A673 (cell line): ENCODE measurements at regions of chr12 and their contacts with region 1.

Region 1: GRCh38 chr12:65306366-65307168 is 28.1 kb downstream of the MSRB3 start:
- DNase-seq: peak; percentile 88
- H3K4me3 ChIP-seq: no peak overlapping the region
- H3K27ac ChIP-seq: peak overlapping the region; percentile 80
- H3K4me1 ChIP-seq: peaks cover 53% of the 10 kb centered on the region
- H3K27me3 ChIP-seq: no peaks in the 10 kb centered on the region
- CTCF ChIP-seq: peak; percentile 82

Region 2: DNA sequence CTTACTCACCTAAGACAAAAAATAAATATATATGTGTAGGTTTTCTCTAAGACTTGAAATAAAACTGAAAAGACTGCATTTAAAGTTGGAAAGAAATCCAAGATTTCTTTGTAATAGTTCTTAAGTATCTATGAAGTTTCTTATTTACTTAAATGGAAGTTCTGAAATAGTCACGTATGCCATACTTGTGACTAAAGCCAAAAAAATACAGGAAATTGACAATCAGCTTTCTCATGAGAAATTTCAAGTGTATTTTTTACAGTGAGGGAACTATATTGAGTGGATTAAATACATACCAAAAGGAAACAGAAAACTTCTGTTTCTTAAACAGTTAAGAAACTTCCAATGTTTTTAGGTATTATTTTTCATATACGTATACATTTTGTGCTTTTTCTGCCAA is 1826.4 kb before region 1 on chr12:
- CTCF ChIA-PET with region 1: no interaction called
- POLR2A ChIA-PET with region 1: no interaction called
- intact Hi-C with region 1: no loop called
- DNase-seq: no peak
- H3K4me3 ChIP-seq: no peak overlapping the region
- H3K27ac ChIP-seq: no peak overlapping the region
- H3K4me1 ChIP-seq: no peaks in the 10 kb centered on the region
- H3K27me3 ChIP-seq: no peaks in the 10 kb centered on the region
- CTCF ChIP-seq: no peak

Region 3: GRCh38 chr12:65529771-65530435 is 223.3 kb after region 1 on chr12:
- CTCF ChIA-PET with region 1: no interaction called
- POLR2A ChIA-PET with region 1: no interaction called
- intact Hi-C with region 1: no loop called
- DNase-seq: no peak
- H3K4me3 ChIP-seq: no peak overlapping the region
- H3K27ac ChIP-seq: no peak overlapping the region
- H3K4me1 ChIP-seq: peaks cover 6% of the 10 kb centered on the region
- H3K27me3 ChIP-seq: no peaks in the 10 kb centered on the region
- CTCF ChIP-seq: no peak

Region 4: DNA sequence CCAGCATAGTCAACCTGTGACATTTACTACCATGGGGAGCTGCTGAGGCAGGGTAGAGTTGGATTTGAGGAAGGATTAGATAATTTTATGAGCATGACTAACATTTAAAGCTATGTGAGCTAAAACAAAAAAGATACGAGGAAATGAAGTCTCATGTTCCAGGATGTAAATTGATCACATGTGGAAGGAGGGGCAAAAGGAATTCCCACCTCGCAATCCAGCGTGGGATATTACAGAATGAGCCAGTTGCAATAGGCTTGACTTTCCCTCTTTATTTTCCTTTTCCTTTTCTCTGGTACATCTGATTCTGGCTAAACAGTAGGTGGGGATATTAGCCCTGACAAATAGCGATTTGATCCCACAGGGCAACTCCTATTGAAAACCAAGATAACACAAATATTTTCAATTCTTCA is 302.8 kb after region 1 on chr12:
- CTCF ChIA-PET with region 1: no interaction called
- POLR2A ChIA-PET with region 1: no interaction called
- intact Hi-C with region 1: loop called (anchors 5 kb)
- DNase-seq: peak; percentile 62
- H3K4me3 ChIP-seq: no peak overlapping the region
- H3K27ac ChIP-seq: no peak overlapping the region
- H3K4me1 ChIP-seq: peaks cover 32% of the 10 kb centered on the region
- H3K27me3 ChIP-seq: no peaks in the 10 kb centered on the region
- CTCF ChIP-seq: 0 out of 2 replicates have a peak, but pooled peaks have one; percentile 20

Region 5: DNA sequence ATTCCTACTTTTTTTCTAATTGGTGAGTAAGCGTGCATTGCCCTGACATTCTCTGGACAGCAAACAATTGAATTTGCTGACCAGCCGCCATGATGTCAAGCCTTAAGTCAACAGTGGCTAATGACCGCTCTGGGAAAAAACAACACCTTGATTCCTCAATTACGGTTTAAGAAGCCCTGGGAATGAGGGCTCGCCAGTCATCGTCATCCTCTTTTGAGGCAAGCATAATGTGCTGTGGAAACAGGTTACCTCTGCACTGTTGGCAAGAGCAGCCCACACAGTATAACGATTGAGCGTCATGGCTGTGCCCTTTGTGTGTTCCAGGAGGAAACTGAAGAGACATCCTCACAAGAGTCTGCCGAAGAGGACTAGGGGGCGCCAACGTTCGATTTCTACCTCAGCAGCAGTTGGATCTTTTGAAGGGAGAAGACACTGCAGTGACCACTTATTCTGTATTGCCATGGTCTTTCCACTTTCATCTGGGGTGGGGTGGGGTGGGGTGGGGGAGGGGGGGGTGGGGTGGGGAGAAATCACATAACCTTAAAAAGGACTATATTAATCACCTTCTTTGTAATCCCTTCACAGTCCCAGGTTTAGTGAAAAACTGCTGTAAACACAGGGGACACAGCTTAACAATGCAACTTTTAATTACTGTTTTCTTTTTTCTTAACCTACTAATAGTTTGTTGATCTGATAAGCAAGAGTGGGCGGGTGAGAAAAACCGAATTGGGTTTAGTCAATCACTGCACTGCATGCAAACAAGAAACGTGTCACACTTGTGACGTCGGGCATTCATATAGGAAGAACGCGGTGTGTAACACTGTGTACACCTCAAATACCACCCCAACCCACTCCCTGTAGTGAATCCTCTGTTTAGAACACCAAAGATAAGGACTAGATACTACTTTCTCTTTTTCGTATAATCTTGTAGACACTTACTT is 656.6 kb after region 1 on chr12:
- CTCF ChIA-PET with region 1: no interaction called
- POLR2A ChIA-PET with region 1: no interaction called
- intact Hi-C with region 1: loop called (anchors 10 kb)
- DNase-seq: peak; percentile 70
- H3K4me3 ChIP-seq: no peak overlapping the region
- H3K27ac ChIP-seq: peak overlapping the region; percentile 52
- H3K4me1 ChIP-seq: peaks cover 59% of the 10 kb centered on the region
- H3K27me3 ChIP-seq: no peaks in the 10 kb centered on the region
- CTCF ChIP-seq: peak; percentile 64

Region 6: GRCh38 chr12:66409195-66409871 is 1102.8 kb after region 1 on chr12:
- CTCF ChIA-PET with region 1: no interaction called
- POLR2A ChIA-PET with region 1: no interaction called
- intact Hi-C with region 1: loop called (anchors 5 kb)
- DNase-seq: peak; percentile 77
- H3K4me3 ChIP-seq: no peak overlapping the region
- H3K27ac ChIP-seq: no peak overlapping the region
- H3K4me1 ChIP-seq: no peaks in the 10 kb centered on the region
- H3K27me3 ChIP-seq: peaks cover 6% of the 10 kb centered on the region
- CTCF ChIP-seq: peak; percentile 77